ENCODE measurements at regions of chr2 and their contacts with region 1.

Region 1: DNA sequence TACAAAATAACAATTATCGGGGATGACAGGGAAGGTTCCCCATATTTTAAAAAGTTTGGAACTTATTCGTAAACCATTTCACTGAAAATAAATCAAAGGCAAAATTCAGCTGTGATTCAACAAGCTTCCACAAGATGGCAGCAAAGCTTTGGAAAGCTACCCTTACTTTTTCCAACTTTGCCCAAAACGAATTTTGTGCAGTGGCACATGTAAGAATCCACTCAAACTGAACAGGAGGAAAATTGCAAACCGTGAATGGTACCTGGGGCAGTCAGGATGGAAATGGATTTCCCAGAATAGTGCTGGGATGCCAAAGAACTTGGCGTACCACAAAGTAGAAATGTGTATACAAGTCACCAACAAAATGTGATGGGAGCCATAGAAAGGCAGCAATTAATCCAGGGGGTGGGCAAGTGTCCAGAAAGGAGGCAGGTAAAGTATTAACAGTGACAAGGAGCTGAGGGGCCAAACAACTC is 10.7 kb downstream of the RPL31 start:
- DNase-seq: peak; percentile 19
- H3K4me3 Mint-ChIP-seq: no peak overlapping the region
- H3K27ac Mint-ChIP-seq: peak overlapping the region; percentile 41
- H3K4me1 Mint-ChIP-seq: peaks cover 36% of the 10 kb centered on the region
- H3K27me3 Mint-ChIP-seq: no peaks in the 10 kb centered on the region

Region 2: GRCh38 chr2:101124643-101125366 is 112.1 kb after region 1 on chr2:
- intact Hi-C with region 1: no loop called
- DNase-seq: no peak
- H3K4me3 Mint-ChIP-seq: no peak overlapping the region
- H3K27ac Mint-ChIP-seq: no peak overlapping the region
- H3K4me1 Mint-ChIP-seq: peaks cover 7% of the 10 kb centered on the region
- H3K27me3 Mint-ChIP-seq: peaks cover 4% of the 10 kb centered on the region

Region 3: DNA sequence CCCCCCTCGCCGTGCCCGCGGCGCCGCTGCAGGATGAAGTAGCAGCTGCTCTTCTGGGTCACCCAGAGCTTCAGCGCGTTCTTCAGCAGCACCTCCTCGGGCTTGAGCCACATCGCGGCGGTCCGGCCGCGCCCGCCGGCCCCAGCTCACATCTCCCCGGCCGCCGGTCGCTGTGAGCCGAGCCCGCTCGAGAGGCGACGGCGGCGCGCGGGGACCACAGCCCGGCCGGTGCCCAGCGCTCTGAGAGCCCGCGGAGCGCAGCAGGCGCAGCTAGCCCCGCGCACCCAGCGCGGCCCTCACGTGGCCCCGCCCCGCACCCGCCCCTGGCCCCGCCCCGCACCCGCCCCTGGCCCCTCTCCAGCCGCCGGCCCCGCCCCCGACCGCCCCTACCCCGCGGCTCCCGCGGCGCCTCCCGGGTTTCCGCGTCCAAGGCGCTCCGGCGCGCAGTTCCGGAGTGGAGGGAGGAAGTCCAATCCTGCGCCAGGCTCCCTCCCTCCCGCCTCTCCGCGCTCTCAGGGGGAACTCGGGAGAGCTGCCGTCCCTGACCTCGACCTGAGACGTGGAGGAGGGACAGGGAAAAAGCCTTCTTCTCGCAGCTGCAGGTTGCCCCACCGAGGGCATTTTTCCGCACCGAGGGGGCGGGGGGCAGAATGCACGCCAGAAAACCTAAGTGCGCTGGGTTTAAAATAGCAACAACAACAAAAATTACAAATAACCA is 138.6 kb after region 1 on chr2 and contains the start of gene TBC1D8:
- intact Hi-C with region 1: loop called (anchors 2 kb)
- DNase-seq: peak; percentile 63
- H3K4me3 Mint-ChIP-seq: peak within 1 kb of the TSS; percentile 75
- H3K27ac Mint-ChIP-seq: no peak within 1 kb of the TSS
- H3K4me1 Mint-ChIP-seq: peaks cover 11% of the 10 kb centered on the region
- H3K27me3 Mint-ChIP-seq: peaks cover 60% of the 10 kb centered on the region
- total RNA-seq, gene TBC1D8: 0.91 and 1.1 TPM in 2 replicates

Region 4: DNA sequence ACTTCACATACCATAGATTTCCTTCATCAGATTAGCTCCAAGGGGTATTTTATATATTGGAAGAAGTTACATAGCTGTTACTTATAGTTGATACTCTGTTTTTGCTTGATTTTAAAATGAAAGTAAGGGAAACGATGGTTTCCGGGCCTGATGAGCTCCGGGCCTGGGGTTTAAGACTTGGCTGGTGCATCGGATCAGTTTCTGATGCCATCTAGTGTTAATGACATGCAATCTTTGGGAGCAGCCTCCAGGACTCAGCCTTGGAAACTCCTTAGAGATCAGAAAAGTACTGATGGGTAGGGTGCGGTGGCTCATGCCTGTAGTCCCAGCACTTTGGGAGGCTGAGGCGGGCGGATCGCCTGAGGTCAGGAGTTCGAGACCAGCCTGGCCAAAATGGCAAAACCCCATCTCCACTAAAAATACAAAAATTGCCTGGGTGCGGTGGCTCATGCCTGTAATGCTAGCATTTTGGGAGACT is 192.8 kb after region 1 on chr2:
- intact Hi-C with region 1: loop called (anchors 1 kb)
- DNase-seq: peak; percentile 18
- H3K4me3 Mint-ChIP-seq: peak overlapping the region; percentile 53
- H3K27ac Mint-ChIP-seq: no peak overlapping the region
- H3K4me1 Mint-ChIP-seq: peaks cover 14% of the 10 kb centered on the region
- H3K27me3 Mint-ChIP-seq: peaks cover 2% of the 10 kb centered on the region

Region 5: DNA sequence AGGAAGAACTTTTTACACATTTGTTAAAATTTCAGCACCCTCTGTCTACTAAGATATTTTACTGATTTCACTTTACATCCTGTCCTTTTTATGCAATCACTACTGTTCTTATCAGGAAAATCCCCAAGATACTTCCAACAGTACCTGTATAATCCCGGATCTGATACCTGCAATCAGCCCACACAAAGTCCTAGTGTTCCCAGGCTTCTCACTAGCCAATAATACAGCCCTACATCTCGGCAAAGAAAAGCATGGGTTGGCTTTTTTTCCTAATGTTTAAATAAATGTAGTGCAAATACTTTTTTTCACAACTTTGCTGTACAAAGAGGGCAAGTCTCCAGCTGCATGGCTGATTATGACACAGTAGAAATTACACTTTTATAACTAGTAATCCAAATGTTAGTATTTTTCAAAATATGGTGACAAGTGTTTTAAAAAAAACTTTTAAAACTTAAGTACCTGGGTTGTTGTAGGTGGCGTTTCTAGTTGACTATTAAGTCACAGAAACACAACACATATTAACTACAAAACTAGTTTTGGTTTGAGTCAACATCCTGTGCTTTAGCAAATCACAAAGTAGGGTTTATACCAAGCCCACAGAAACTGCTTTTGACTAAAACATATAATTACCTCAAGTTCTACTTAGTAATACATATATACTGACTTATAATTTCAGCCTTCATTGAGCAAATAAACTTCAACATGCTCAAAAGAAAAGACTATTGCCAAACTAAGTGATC is 259.5 kb after region 1 on chr2:
- intact Hi-C with region 1: loop called (anchors 1 kb)
- DNase-seq: no peak
- H3K4me3 Mint-ChIP-seq: peak overlapping the region; percentile 59
- H3K27ac Mint-ChIP-seq: peak overlapping the region; percentile 81
- H3K4me1 Mint-ChIP-seq: peaks cover 48% of the 10 kb centered on the region
- H3K27me3 Mint-ChIP-seq: no peaks in the 10 kb centered on the region

Region 6: DNA sequence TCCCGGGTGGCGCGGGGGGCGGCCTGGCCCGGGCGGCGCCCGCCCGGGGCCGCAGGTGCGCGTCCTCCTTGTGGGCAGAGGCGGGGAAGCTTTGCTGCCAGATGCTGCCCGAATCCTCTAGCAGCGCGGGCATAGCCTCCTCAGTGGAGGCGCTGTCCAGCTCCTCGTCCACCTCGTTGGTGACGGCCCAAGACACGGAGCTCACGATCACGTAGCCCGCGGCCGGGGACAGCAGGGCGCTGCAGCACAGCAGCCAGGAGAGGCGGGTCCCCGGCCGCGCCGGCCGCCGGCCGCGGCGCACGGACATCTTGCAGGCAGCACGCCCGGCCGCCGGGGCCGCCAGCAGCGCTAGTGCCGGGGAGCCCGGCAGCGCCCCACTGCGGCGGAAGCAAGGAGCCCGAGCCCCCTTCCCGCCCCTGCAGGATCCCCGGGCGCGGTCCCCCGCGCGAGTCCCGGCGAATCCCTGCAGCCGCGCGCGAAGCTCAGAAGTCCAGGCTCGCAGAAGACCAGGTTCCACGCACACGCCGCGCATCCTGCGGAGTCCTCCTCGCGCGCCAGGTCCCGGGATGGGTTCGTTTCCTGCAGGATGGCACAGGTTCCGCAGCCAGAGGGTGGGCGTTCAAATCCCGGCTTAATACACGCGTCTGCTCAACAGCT is 374.5 kb after region 1 on chr2 and contains the start of gene CREG2:
- intact Hi-C with region 1: loop called (anchors 10 kb)
- DNase-seq: peak; percentile 56
- H3K4me3 Mint-ChIP-seq: peak within 1 kb of the TSS; percentile 65
- H3K27ac Mint-ChIP-seq: no peak within 1 kb of the TSS
- H3K4me1 Mint-ChIP-seq: peaks cover 11% of the 10 kb centered on the region
- H3K27me3 Mint-ChIP-seq: peaks cover 64% of the 10 kb centered on the region
- total RNA-seq, gene CREG2: not detected in 2 replicates

Measured in activated T-helper 1 cell treated with anti-CD3 and anti-CD28 coated beads, Interleukin-12 subunit alpha, Interleukin-12 subunit beta, Interleukin-2, Interleukin-4 antibody, amounts not matched to agents 30 ng/mL and 10 ng/mL and 1 ng/mL, durations not matched to agents 14 hours and 24 hours and 36 hours (primary cell).